Activated naive CD4-positive, alpha-beta T cell treated with anti-CD3 and anti-CD28 coated beads for 36 hours (primary cell): ENCODE measurements at regions of chr1 and their contacts with region 1.

Region 1: GRCh38 chr1:35451125-35451528 is 106.1 kb downstream of the KIAA0319L start:
- DNase-seq: peak; percentile 90
- H3K4me3 Mint-ChIP-seq: no peak overlapping the region
- H3K27ac Mint-ChIP-seq: no peak overlapping the region
- H3K4me1 Mint-ChIP-seq: peaks cover 34% of the 10 kb centered on the region
- H3K27me3 Mint-ChIP-seq: no peaks in the 10 kb centered on the region

Region 2: DNA sequence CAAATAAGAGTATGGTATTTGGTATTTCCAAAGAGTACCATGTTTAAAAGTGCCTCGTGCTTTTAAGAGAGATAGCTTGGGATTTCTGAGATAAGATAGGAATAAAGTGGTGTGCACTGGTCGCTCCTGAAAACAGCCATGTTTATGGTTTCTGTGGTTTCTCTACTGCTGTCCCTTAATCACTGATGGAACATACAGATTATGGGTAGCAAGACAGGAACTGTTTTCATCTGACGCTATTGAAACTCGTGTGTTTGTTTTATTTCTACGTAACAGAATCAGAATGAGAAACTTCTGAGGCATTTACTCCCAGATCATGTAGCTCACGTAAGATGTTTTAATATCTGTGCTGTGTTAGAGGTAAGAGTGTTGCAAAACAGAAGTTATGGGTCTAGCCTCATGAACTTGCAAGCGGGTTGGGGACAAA is 19.9 kb before region 1 on chr1:
- CTCF ChIA-PET with region 1: interaction called, 52 read pairs
- intact Hi-C with region 1: no loop called
- DNase-seq: no peak
- H3K4me3 Mint-ChIP-seq: no peak overlapping the region
- H3K27ac Mint-ChIP-seq: peak overlapping the region; percentile 37
- H3K4me1 Mint-ChIP-seq: peaks cover 7% of the 10 kb centered on the region
- H3K27me3 Mint-ChIP-seq: no peaks in the 10 kb centered on the region

Region 3: DNA sequence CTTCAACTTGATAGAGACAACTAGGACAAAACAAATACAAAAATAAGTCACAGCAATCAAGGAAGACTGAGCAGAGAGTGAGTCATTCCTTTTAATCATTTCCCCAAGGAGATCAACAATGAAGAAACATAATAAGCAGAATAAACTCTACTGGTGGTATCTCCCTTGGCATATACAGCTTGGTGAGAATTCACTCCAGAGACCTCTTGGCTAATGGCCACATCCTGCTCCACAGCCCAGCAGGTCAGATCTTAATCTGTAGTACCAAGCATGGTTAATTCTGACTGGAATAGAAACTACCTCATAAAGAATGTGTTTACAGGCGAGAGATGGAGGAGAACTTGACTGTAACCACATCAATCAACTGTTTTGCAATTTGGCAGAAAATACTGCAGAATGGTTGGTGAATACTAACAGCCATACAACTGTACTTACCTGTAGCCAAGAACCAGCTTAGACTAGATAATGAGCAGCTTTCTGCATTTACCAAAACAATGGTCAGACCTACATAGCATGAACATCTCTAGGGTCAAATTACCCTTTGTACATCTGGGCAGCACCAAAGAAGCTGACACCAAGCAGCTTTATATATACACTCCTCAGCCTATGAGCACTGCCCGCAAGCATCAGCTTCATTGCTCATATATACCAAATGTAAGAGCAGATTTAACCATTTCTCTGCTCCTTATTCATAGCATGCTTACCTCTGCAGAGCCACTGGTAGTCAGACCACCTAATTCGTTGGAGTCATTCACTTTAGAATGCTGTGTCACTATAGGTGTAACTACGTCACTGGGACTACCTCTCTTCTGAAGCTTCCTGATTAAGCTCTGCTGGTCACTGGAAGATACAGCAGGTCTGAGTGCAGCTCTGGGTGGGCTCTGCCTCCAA is 55.0 kb after region 1 on chr1:
- CTCF ChIA-PET with region 1: interaction called, 14 read pairs
- intact Hi-C with region 1: loop called (anchors 2 kb)
- DNase-seq: peak; percentile 52
- H3K4me3 Mint-ChIP-seq: no peak overlapping the region
- H3K27ac Mint-ChIP-seq: peak overlapping the region; percentile 54
- H3K4me1 Mint-ChIP-seq: peaks cover 54% of the 10 kb centered on the region
- H3K27me3 Mint-ChIP-seq: no peaks in the 10 kb centered on the region

Region 4: GRCh38 chr1:35544978-35545377 is 93.9 kb after region 1 on chr1:
- CTCF ChIA-PET with region 1: interaction called, 45 read pairs
- intact Hi-C with region 1: loop called (anchors 1 kb)
- DNase-seq: peak; percentile 74
- H3K4me3 Mint-ChIP-seq: no peak overlapping the region
- H3K27ac Mint-ChIP-seq: no peak overlapping the region
- H3K4me1 Mint-ChIP-seq: peaks cover 52% of the 10 kb centered on the region
- H3K27me3 Mint-ChIP-seq: no peaks in the 10 kb centered on the region

Region 5: GRCh38 chr1:35564037-35564883 is 113.1 kb after region 1 on chr1:
- CTCF ChIA-PET with region 1: interaction called, 147 read pairs
- intact Hi-C with region 1: loop called (anchors 1 kb)
- DNase-seq: peak; percentile 92
- H3K4me3 Mint-ChIP-seq: no peak overlapping the region
- H3K27ac Mint-ChIP-seq: no peak overlapping the region
- H3K4me1 Mint-ChIP-seq: peaks cover 16% of the 10 kb centered on the region
- H3K27me3 Mint-ChIP-seq: no peaks in the 10 kb centered on the region

Region 6: DNA sequence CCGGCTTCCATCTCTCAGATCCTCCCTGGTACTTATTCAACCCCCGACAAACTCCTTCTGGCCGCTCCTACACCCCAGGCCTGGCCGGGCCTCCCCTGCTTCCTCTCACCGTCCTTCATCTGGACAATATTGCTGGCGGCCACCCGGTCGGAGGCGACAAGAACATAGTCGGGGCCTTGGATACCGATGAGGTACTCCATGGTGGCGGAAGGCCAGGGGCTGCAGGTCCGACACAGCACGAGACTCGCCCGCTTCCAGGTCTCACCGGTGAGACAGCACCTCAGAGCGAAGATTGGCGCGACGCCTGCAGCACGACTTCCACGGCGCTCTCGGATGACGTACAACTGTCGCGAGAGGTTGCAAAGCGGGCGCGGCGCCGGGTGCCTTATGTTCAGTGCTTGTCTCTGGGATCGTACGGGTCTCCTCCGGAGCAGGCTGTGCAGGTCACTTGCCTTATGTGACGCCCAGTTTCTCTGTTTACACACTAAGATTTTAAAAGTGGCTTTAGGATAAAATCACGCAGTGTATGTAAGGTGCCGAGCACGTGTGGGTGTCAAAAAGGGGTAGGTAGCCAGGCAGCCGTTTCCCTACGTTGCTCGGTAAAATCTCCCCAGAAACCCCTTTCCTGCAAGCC is 190.2 kb after region 1 on chr1 and contains the start of gene PSMB2:
- CTCF ChIA-PET with region 1: no interaction called
- intact Hi-C with region 1: loop called (anchors 5 kb)
- DNase-seq: peak; percentile 98
- H3K4me3 Mint-ChIP-seq: peak within 1 kb of the TSS; percentile 100
- H3K27ac Mint-ChIP-seq: peak within 1 kb of the TSS; percentile 99
- H3K4me1 Mint-ChIP-seq: peaks cover 30% of the 10 kb centered on the region
- H3K27me3 Mint-ChIP-seq: peaks cover 5% of the 10 kb centered on the region
- total RNA-seq, gene PSMB2: 91.9 to 96.4 TPM

Region 7: DNA sequence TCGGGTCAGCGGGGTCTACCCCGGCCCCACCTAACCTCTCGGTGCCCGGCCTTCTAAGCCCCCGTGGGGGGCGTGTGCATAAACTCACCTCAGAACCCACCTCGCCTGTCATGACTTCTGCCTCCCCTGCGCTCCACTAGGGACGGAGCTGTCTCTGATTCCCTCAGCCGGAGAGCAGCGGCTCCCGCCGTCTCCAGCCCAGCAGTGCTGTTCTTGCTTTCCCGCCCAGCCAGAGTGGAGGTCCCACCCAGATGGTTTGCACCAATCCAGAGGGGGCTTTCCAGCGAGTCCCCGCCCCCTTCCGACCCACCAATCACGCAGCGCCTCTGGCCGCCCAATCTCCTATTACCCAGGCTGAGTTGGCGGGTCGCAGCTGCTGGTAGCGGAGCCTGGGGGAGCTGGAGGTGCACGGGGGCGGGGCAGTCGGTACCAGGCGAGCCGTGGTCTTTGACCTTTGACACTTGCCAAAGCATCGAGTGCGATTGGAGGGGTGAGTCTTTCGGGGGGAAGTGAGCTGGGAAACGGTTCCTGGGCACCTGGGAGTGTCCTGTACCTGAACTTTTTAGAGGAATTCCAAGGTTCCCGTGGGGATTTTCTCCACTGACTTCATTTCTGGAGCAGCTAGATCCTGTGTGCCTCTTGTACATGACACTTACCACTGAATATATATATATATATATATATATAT is 318.8 kb after region 1 on chr1 and contains the start of gene CLSPN:
- CTCF ChIA-PET with region 1: interaction called, 11 read pairs
- intact Hi-C with region 1: loop called (anchors 2 kb)
- DNase-seq: peak; percentile 98
- H3K4me3 Mint-ChIP-seq: peak within 1 kb of the TSS; percentile 98
- H3K27ac Mint-ChIP-seq: peak within 1 kb of the TSS; percentile 97
- H3K4me1 Mint-ChIP-seq: peaks cover 8% of the 10 kb centered on the region
- H3K27me3 Mint-ChIP-seq: no peaks in the 10 kb centered on the region
- total RNA-seq, gene CLSPN: 48.9 to 51.8 TPM